Breast epithelium (tissue), 4 donors: ENCODE measurements at regions of chr16 and their contacts with region 1.

Region 1: DNA sequence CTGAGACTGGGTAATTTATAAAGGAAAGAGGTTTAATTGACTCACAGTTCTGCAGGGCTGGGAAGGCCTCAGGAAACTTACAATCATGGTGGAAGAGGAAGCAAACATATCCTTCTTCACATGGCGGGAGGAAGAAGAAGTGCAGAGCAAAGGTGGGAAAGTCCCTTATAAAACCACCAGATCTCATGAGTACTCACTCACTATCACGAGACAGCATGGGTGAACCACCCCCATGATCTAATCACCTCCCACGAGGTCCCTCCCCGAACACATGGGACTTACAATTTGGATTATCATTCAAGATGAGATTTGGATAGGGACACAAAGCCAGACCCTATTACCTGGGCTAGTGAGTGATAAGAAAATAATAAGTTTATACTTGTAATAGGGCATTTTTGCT is 70.6 kb upstream of the HS3ST2 start:
- DNase-seq: no peak
- H3K4me3 ChIP-seq: no peak overlapping the region
- H3K27ac ChIP-seq: no peak overlapping the region
- H3K4me1 ChIP-seq: no peaks in the 10 kb centered on the region
- H3K27me3 ChIP-seq: no peaks in the 10 kb centered on the region
- CTCF ChIP-seq: no peak
- POLR2A ChIP-seq: no peak

Region 2: DNA sequence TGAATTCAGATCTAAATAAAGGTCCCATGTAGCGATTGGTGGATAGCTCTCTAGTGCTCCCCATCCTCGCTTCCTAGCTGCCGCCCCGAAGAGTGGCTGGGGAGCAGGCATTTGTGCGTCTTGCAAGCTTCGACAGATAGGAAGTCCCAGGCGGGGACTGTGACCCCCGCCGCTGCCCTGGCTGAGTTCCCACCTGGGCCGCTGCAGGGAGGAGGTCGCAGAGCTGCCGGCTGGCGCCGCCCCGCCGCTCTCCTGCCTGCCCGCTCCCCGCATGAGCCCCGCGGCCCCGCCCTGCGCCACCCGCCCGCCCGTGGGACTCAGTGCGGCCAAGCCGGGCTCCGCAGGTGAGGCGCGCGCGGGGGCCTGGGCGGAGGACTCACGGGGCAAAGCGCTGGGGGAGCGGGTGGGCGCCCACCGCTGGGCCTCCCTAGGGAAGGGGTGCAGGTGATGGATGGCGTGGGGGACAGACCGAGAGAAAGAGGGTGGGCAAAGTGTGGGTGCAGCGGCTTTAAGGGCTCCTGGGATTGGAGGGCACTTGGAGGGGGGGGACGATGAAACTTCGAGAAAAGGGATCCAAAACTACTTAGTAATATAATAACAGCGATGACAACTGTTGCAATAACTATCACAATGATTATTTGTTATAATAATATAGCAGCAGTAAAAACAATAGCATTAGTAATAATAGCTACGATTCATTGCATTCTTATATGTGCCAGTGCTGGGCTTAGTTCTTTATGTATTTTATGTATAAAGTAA is 1079.3 kb before region 1 on chr16 and contains the start of gene OTOA:
- intact Hi-C with region 1: loop called (anchors 5 kb)
- DNase-seq: no peak
- H3K4me3 ChIP-seq: peak within 1 kb of the TSS; percentile 12 to 64 (median 39)
- H3K27ac ChIP-seq: no peak within 1 kb of the TSS
- H3K4me1 ChIP-seq: peaks cover 0 to 4% of the 10 kb centered on the region in 2 donors
- H3K27me3 ChIP-seq: peaks cover 4 to 9% of the 10 kb centered on the region in 2 donors
- CTCF ChIP-seq: no peak
- POLR2A ChIP-seq: no peak
- total RNA-seq, gene OTOA: 0.96 to 1.5 TPM in 2 of 3 donors, not detected in the other